ENCODE measurements at regions of chr14 and their contacts with region 1.

Region 1: GRCh38 chr14:77124345-77125280 is 17.0 kb downstream of the ZDHHC22 start:
- DNase-seq: peak in 1 of 2 experiments; percentile 81
- H3K4me3 ChIP-seq: peak overlapping the region; percentile 31; the same call in 1 of the 2 replicates
- H3K27ac ChIP-seq: no peak overlapping the region
- H3K4me1 ChIP-seq: peaks cover 26% of the 10 kb centered on the region
- H3K27me3 ChIP-seq: peaks cover 51% of the 10 kb centered on the region
- CTCF ChIP-seq: peak; percentile 28; the same call in 1 of the 2 replicates

Region 2: DNA sequence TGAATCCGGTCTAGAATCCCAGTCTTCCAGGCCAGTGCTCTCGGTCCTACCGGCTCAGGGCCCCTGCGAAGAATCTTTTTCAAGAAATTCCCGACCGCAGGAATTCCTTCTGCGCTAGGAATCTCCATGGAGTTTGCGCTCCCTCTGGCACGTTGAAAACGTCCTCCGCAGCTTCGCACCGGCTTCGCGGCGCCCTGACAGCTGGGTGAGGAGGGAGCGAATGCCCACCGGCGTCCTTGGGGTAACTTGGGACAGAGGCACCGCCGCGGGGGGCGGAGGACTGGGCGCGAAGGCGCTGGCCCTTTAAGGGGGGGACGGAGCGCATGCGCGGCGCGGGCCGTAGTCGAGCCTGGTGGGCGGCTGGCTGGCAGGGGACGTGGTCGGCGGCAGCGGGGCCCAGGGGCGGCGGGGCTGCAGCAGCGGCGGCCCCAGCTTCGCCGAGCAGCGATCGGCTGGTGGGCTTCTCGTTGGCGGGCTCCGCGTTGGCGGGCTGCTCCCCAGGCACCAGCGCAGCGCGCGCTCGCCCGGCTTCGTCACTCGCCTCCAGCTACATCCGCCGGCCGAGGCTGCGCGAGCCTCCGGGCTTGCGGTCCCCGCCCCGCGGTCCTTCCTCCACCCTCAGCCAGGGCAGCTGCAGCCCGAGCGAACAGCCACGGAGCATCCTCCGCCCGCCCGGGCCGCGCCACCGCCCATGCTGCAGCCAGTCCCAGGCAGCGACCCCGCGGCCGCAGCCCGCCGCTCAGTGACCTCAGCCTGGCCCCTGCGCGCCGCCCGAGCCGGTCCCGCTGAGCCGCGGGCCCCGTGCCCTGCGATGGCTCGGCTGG is 363.3 kb before region 1 on chr14 and contains the start of gene VASH1:
- CTCF ChIA-PET with region 1: interaction called, 14 read pairs
- POLR2A ChIA-PET with region 1: no interaction called
- intact Hi-C with region 1: no loop called
- DNase-seq: peak in 1 of 2 experiments; percentile 87
- H3K4me3 ChIP-seq: peak within 1 kb of the TSS; percentile 12; the same call in 1 of the 2 replicates
- H3K27ac ChIP-seq: no peak within 1 kb of the TSS
- H3K4me1 ChIP-seq: no peaks in the 10 kb centered on the region
- H3K27me3 ChIP-seq: peaks cover 99% of the 10 kb centered on the region
- CTCF ChIP-seq: no peak
- total RNA-seq, gene VASH1: 4.3 and 7.4 TPM in 2 replicates

Region 3: GRCh38 chr14:77033622-77034521 is 90.7 kb before region 1 on chr14:
- CTCF ChIA-PET with region 1: no interaction called
- POLR2A ChIA-PET with region 1: interaction called, 5 read pairs
- intact Hi-C with region 1: loop called (anchors 1 kb)
- DNase-seq: peak; percentile 94
- H3K4me3 ChIP-seq: peak overlapping the region; percentile 56
- H3K27ac ChIP-seq: peak overlapping the region; percentile 93
- H3K4me1 ChIP-seq: peaks cover 92% of the 10 kb centered on the region
- H3K27me3 ChIP-seq: no peaks in the 10 kb centered on the region
- CTCF ChIP-seq: peak; percentile 17; the same call in 1 of the 2 replicates

Region 4: GRCh38 chr14:77240336-77240911 is 115.8 kb after region 1 on chr14:
- CTCF ChIA-PET with region 1: no interaction called
- POLR2A ChIA-PET with region 1: interaction called, 12 read pairs
- intact Hi-C with region 1: no loop called
- DNase-seq: no peak
- H3K4me3 ChIP-seq: no peak overlapping the region
- H3K27ac ChIP-seq: no peak overlapping the region
- H3K4me1 ChIP-seq: no peaks in the 10 kb centered on the region
- H3K27me3 ChIP-seq: peaks cover 89% of the 10 kb centered on the region
- CTCF ChIP-seq: no peak

Region 5: DNA sequence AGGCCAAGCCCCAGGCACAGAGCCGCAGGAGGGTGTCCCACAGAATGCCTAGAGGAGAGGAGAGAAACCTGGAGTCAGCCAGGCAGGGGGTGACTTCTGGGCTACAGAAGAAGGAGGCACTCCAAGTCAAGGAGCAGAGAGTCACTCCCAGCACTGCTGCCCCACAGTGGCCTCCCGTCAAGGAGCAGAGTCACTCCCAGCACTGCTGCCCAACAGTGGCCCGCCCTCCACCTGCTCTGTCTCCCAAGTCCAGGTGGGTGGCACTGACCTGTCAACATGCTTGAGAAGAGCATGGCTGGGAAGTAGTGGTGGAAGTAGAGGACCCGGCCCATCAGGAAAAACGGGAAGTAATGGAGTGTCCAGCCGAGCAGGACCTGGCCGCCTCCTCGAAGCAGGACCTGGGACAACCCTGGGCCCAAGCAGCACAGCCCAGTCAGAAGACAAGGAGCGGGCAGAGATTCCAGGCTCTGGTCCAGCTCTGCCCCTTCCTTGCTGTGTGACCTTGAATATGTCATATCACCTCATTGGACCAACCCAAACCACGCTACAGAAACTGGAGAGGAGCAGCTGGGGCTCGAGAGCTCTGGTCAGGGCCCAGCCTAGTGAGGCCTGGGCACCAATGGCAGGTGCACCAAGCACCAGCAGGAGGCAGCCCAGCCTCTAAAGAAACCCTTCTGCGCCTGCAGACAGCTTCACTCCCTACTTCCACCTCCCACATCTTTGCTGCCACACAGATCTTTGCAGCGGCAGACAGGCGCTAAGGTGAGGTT is 154.0 kb after region 1 on chr14:
- CTCF ChIA-PET with region 1: no interaction called
- POLR2A ChIA-PET with region 1: no interaction called
- intact Hi-C with region 1: no loop called
- DNase-seq: no peak
- H3K4me3 ChIP-seq: no peak overlapping the region
- H3K27ac ChIP-seq: no peak overlapping the region
- H3K4me1 ChIP-seq: no peaks in the 10 kb centered on the region
- H3K27me3 ChIP-seq: no peaks in the 10 kb centered on the region
- CTCF ChIP-seq: 0 out of 2 replicates have a peak, but pooled peaks have one; percentile 31